Activated CD8-positive, alpha-beta memory T cell treated with anti-CD3 and anti-CD28 coated beads, Interleukin-2, amount 10 ng/mL, durations not matched to agents 7 days and 5 days (primary cell): ENCODE measurements at regions of chr11 and their contacts with region 1.

Region 1: GRCh38 chr11:63768237-63769043 is at the start of gene ZFTA:
- DNase-seq: peak; percentile 61
- ATAC-seq: peak; percentile 68
- H3K4me3 Mint-ChIP-seq: peak within 1 kb of the TSS; percentile 87
- H3K27ac Mint-ChIP-seq: peak within 1 kb of the TSS; percentile 70
- H3K4me1 Mint-ChIP-seq: peaks cover 15% of the 10 kb centered on the region
- H3K27me3 Mint-ChIP-seq: peaks cover 29% of the 10 kb centered on the region
- total RNA-seq, gene ZFTA: 2.6 to 4.2 TPM

Region 2: GRCh38 chr11:63508009-63508408 is 260.4 kb before region 1 on chr11:
- CTCF ChIA-PET with region 1: no interaction called
- DNase-seq: peak; percentile 50
- ATAC-seq: peak; percentile 49
- H3K4me3 Mint-ChIP-seq: no peak overlapping the region
- H3K27ac Mint-ChIP-seq: no peak overlapping the region
- H3K4me1 Mint-ChIP-seq: peaks cover 5% of the 10 kb centered on the region
- H3K27me3 Mint-ChIP-seq: no peaks in the 10 kb centered on the region

Region 3: DNA sequence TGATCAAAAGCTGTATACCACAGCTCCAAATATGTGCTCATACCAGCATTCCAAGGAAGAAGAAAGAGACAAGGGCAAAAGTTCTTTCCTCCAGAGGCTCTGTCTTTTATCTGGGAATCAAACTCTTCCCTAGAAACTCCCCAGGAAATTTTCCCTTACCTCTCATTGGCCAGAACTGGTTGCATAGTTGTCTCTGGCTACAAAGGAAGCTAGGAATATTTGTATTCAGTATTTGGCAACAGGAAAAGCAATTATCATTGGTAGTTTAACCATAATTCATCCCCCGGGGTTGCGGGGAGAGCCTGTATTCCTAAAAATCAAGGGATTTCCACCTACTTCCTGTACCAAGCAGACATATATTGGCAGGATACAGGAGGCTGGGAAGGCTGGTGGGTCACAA is 10.6 kb after region 1 on chr11:
- CTCF ChIA-PET with region 1: interaction called, 13 read pairs
- DNase-seq: no peak
- ATAC-seq: no peak
- H3K4me3 Mint-ChIP-seq: no peak overlapping the region
- H3K27ac Mint-ChIP-seq: no peak overlapping the region
- H3K4me1 Mint-ChIP-seq: no peaks in the 10 kb centered on the region
- H3K27me3 Mint-ChIP-seq: peaks cover 20% of the 10 kb centered on the region

Region 4: GRCh38 chr11:63945477-63946163 is 177.2 kb after region 1 on chr11:
- CTCF ChIA-PET with region 1: interaction called, 21 read pairs
- DNase-seq: peak; percentile 68
- ATAC-seq: peak; percentile 76
- H3K4me3 Mint-ChIP-seq: no peak overlapping the region
- H3K27ac Mint-ChIP-seq: no peak overlapping the region
- H3K4me1 Mint-ChIP-seq: peaks cover 21% of the 10 kb centered on the region
- H3K27me3 Mint-ChIP-seq: no peaks in the 10 kb centered on the region

Region 5: GRCh38 chr11:64152841-64153691 is 384.6 kb after region 1 on chr11:
- CTCF ChIA-PET with region 1: interaction called, 14 read pairs
- DNase-seq: peak; percentile 76
- ATAC-seq: peak; percentile 96
- H3K4me3 Mint-ChIP-seq: no peak overlapping the region
- H3K27ac Mint-ChIP-seq: no peak overlapping the region
- H3K4me1 Mint-ChIP-seq: no peaks in the 10 kb centered on the region
- H3K27me3 Mint-ChIP-seq: peaks cover 9% of the 10 kb centered on the region